B cell (primary cell): ENCODE measurements at regions of chr16 and their contacts with region 1.

Region 1: DNA sequence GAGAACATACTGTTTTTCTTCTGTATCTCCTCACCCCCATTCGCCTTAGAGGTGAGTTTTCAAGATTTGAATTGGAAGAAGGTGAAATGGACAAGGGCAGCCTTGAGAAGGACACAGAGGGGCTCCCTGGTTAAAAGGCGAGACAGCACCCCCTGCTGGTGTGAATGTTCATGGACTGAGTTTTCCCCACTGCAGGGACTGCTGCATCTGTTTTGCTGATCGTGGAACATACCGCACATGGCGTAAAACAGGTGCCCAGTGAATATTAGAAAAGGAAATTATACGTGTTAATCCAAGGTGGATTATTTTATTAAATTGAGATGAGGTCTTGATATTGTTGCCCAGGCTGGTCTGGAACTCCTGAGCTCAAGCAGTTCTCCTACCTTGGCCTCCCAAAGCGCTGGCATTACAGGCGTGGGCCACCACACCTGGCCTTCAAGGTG is 54.5 kb downstream of the NDE1 start:
- DNase-seq: peak; percentile 76
- ATAC-seq: peak; percentile 72
- H3K4me3 ChIP-seq: no peak overlapping the region
- H3K4me3 Mint-ChIP-seq: no peak overlapping the region
- H3K27ac ChIP-seq: no peak overlapping the region
- H3K27ac Mint-ChIP-seq: no peak overlapping the region
- H3K4me1 ChIP-seq: no peaks in the 10 kb centered on the region
- H3K4me1 Mint-ChIP-seq: peaks cover 6% of the 10 kb centered on the region
- H3K27me3 ChIP-seq: no peaks in the 10 kb centered on the region
- H3K27me3 Mint-ChIP-seq: no peaks in the 10 kb centered on the region
- CTCF ChIP-seq: peak; percentile 92

Region 2: DNA sequence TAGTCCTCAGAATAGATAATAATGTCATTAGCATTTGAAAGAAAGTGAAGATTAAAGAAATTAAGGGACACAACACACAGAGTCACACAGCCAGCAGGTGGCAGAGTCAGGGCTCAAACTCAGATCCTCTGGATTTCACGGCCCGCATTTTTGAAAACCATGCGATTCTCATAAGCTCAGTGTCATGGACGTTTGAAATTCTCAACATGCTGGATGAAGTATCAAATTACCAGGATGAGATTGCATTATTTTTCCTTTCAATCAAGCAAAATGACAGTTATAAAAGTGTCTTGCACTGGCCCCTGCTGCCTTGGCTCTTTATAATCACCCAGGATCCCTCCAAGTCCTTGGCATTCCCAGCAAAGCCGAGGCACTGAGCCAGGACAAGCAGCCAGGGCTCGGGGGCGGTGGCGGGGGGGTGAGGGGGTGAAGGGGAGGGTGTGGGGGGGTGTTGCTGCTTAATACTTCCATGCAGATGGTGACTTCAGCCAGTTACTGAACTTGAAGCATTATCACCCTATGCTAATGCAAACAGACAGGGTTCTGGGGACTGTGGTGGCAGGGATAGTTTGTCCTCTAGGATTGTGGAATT is 276.8 kb before region 1 on chr16:
- CTCF ChIA-PET with region 1: interaction called, 22 read pairs
- POLR2A ChIA-PET with region 1: interaction called, 4 read pairs
- intact Hi-C with region 1: no loop called
- DNase-seq: peak; percentile 61
- ATAC-seq: peak; percentile 56
- H3K4me3 ChIP-seq: no peak overlapping the region
- H3K4me3 Mint-ChIP-seq: no peak overlapping the region
- H3K27ac ChIP-seq: no peak overlapping the region
- H3K27ac Mint-ChIP-seq: no peak overlapping the region
- H3K4me1 ChIP-seq: peaks cover 0 to 3% of the 10 kb centered on the region in 2 donors
- H3K4me1 Mint-ChIP-seq: peaks cover 3% of the 10 kb centered on the region
- H3K27me3 ChIP-seq: no peaks in the 10 kb centered on the region
- H3K27me3 Mint-ChIP-seq: peaks cover 14% of the 10 kb centered on the region
- CTCF ChIP-seq: peak; percentile 63

Region 3: GRCh38 chr16:15434425-15435215 is 269.9 kb before region 1 on chr16 and contains the start of gene BMERB1:
- CTCF ChIA-PET with region 1: interaction called, 3 read pairs
- POLR2A ChIA-PET with region 1: no interaction called
- intact Hi-C with region 1: loop called (anchors 2 kb)
- DNase-seq: peak; percentile 45
- ATAC-seq: peak; percentile 63
- H3K4me3 ChIP-seq: peak within 1 kb of the TSS in 4 of 5 experiments; percentile 31 to 61 (median 48)
- H3K4me3 Mint-ChIP-seq: peak within 1 kb of the TSS; percentile 89
- H3K27ac ChIP-seq: no peak within 1 kb of the TSS
- H3K27ac Mint-ChIP-seq: no peak within 1 kb of the TSS
- H3K4me1 ChIP-seq: peaks cover 9 to 16% of the 10 kb centered on the region in 2 donors
- H3K4me1 Mint-ChIP-seq: peaks cover 16% of the 10 kb centered on the region
- H3K27me3 ChIP-seq: peaks cover 0 to 24% (median 11%) of the 10 kb centered on the region in 4 experiments
- H3K27me3 Mint-ChIP-seq: peaks cover 14% of the 10 kb centered on the region
- CTCF ChIP-seq: no peak
- total RNA-seq, gene BMERB1: 11.2 and 13.5 TPM in 2 replicates

Region 4: DNA sequence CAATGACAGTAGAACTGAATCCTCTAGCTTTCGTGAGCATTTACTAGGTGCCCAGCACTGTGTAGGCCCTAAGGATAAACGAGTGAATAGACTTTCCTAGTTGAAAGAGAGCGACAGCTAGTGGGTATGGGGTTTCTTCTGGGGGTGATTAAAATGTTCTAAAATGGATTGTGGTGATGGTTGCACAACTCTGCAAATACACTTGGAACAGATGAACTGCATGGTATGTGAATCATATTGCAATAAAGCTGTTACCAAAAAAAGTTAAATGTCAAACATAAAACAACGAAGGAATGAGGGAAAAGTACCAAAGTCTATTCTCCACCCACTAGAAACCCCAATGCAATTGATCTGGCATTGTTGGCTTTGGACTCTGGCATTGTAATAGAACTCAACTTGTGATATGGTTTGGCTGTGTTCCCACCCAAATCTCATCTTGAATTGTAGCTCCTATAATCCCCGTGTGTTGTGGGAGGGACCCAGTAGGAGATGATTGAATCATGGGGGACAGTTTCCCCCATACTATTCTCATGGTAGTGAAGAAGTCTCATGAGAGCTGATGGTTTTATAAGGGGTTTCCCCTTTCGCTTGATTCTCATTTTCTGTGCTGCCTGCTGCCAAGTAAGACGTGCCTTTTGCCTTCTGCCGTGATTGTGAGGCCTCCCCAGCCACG is 132.1 kb before region 1 on chr16:
- CTCF ChIA-PET with region 1: no interaction called
- POLR2A ChIA-PET with region 1: no interaction called
- intact Hi-C with region 1: no loop called
- DNase-seq: no peak
- ATAC-seq: no peak
- H3K4me3 ChIP-seq: no peak overlapping the region
- H3K4me3 Mint-ChIP-seq: no peak overlapping the region
- H3K27ac ChIP-seq: no peak overlapping the region
- H3K27ac Mint-ChIP-seq: no peak overlapping the region
- H3K4me1 ChIP-seq: no peaks in the 10 kb centered on the region
- H3K4me1 Mint-ChIP-seq: peaks cover 7% of the 10 kb centered on the region
- H3K27me3 ChIP-seq: no peaks in the 10 kb centered on the region
- H3K27me3 Mint-ChIP-seq: no peaks in the 10 kb centered on the region
- CTCF ChIP-seq: no peak

Region 5: DNA sequence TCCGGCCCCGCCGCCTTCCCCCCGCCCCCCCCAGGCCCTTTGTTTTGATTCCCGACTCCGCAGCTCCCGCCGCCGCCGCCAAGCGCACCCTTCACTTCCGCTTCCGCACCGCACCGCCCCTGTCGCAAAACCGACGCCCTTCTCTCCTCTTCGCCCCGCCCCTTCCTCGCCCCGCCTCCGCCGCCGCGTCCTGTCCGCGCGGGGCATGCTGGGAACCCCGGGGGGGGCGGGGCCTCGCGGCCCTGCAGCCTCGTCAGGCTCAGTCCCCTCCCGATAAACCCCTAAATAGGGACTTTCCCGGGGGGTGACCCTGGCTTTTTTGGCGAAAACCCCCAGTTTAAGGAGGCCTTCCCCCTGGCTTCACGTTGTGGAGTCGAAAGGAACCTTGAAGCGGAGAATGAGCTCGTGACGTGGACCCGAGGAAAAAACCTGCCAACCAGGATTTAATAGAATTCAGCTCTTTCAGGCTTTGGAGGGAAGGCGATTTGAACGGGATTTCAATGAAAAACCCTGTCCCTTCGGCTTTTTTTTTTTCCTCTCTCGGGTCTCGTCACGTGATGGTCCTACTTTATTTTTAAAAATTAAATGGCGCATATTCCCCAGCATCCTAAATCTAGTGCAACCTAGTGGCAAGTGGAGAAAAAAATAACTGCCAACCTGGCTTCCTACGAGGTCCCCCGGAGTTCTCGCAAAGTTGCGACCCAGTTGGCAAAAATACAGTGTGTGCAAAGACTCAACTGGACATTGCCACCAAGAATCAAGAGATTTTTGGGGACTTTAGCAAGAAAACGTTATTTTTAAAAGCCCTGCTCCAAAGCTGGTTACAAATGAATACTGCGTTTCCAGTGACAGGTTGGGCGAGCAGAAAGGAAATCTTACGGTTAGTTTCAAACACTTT is 61.3 kb before region 1 on chr16 and contains the start of gene MARF1:
- CTCF ChIA-PET with region 1: interaction called, 3 read pairs
- POLR2A ChIA-PET with region 1: no interaction called
- intact Hi-C with region 1: loop called (anchors 5 kb)
- DNase-seq: peak; percentile 99
- ATAC-seq: peak; percentile 70
- H3K4me3 ChIP-seq: peak within 1 kb of the TSS; percentile 87 to 96 (median 90)
- H3K4me3 Mint-ChIP-seq: peak within 1 kb of the TSS; percentile 95
- H3K27ac ChIP-seq: peak within 1 kb of the TSS; percentile 93 to 100
- H3K27ac Mint-ChIP-seq: peak within 1 kb of the TSS; percentile 98
- H3K4me1 ChIP-seq: peaks cover 40 to 46% of the 10 kb centered on the region in 2 donors
- H3K4me1 Mint-ChIP-seq: peaks cover 50% of the 10 kb centered on the region
- H3K27me3 ChIP-seq: no peaks in the 10 kb centered on the region
- H3K27me3 Mint-ChIP-seq: no peaks in the 10 kb centered on the region
- CTCF ChIP-seq: peak; percentile 38
- total RNA-seq, gene MARF1: 366 and 402 TPM in 2 replicates

Region 6: DNA sequence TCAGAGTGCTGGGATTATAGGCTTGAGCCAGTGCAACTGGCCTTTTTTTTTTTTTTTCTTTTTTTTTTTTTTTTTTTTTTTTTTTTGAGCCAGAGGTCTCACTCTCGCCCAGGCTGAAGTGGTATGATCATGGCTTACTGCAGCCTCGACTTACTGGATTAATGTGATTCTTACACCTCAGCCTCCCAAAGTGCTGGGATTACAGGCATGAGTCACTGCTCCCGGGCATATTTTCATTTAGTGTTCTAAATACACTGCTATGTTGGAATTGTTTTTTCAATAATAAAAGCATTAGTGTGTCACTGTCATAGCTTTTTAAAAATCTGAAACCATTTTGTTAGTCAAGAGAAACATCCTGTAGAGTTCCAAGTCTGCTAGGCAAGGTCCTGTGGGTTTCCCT is 14.3 kb before region 1 on chr16:
- CTCF ChIA-PET with region 1: interaction called, 15 read pairs
- POLR2A ChIA-PET with region 1: no interaction called
- intact Hi-C with region 1: no loop called
- DNase-seq: no peak
- ATAC-seq: no peak
- H3K4me3 ChIP-seq: no peak overlapping the region
- H3K4me3 Mint-ChIP-seq: no peak overlapping the region
- H3K27ac ChIP-seq: no peak overlapping the region
- H3K27ac Mint-ChIP-seq: no peak overlapping the region
- H3K4me1 ChIP-seq: no peaks in the 10 kb centered on the region
- H3K4me1 Mint-ChIP-seq: no peaks in the 10 kb centered on the region
- H3K27me3 ChIP-seq: no peaks in the 10 kb centered on the region
- H3K27me3 Mint-ChIP-seq: no peaks in the 10 kb centered on the region
- CTCF ChIP-seq: no peak

Region 7: GRCh38 chr16:15749366-15749765 is 44.8 kb after region 1 on chr16:
- CTCF ChIA-PET with region 1: no interaction called
- POLR2A ChIA-PET with region 1: no interaction called
- intact Hi-C with region 1: no loop called
- DNase-seq: no peak
- ATAC-seq: no peak
- H3K4me3 ChIP-seq: no peak overlapping the region
- H3K4me3 Mint-ChIP-seq: no peak overlapping the region
- H3K27ac ChIP-seq: no peak overlapping the region
- H3K27ac Mint-ChIP-seq: no peak overlapping the region
- H3K4me1 ChIP-seq: no peaks in the 10 kb centered on the region
- H3K4me1 Mint-ChIP-seq: no peaks in the 10 kb centered on the region
- H3K27me3 ChIP-seq: no peaks in the 10 kb centered on the region
- H3K27me3 Mint-ChIP-seq: no peaks in the 10 kb centered on the region
- CTCF ChIP-seq: no peak

Region 8: DNA sequence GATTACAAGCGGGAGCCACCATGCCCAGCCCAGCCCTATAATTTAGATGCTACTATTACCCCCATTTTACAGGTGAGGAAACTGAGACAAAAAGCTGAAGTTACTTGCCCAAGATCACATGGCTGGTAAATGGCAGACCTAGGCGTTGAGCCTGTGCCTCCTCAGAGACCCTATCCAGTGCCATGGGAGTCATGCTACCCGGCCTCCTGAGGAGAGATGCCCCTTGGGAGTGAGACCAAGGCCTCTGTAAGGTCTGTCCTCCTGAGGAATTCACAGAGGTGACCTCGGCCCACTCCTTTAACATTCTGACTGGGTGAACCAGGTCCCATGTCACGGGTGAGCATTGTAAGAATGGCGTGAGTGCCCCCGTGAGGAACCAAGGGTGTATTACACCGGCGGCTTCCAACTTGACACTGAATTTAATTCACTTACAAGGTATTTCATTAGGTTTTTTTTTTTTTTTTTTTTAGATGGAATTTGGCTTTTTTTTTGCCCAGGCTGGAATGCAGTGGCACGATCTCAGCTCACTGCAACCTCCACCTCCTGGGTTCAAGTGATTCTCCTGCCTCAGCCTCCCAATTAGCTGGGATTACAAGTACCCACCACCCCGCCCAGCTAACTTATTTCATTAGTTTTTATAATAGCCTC is 423.0 kb after region 1 on chr16:
- CTCF ChIA-PET with region 1: no interaction called
- POLR2A ChIA-PET with region 1: no interaction called
- intact Hi-C with region 1: loop called (anchors 1 kb)
- DNase-seq: peak; percentile 75
- ATAC-seq: peak; percentile 92
- H3K4me3 ChIP-seq: no peak overlapping the region
- H3K4me3 Mint-ChIP-seq: no peak overlapping the region
- H3K27ac ChIP-seq: no peak overlapping the region
- H3K27ac Mint-ChIP-seq: peak overlapping the region; percentile 46
- H3K4me1 ChIP-seq: peaks cover 0 to 3% of the 10 kb centered on the region in 2 donors
- H3K4me1 Mint-ChIP-seq: peaks cover 3% of the 10 kb centered on the region
- H3K27me3 ChIP-seq: no peaks in the 10 kb centered on the region
- H3K27me3 Mint-ChIP-seq: no peaks in the 10 kb centered on the region
- CTCF ChIP-seq: peak; percentile 95